Psoas muscle (tissue), 8 donors: ENCODE measurements at regions of chr14 and their contacts with region 1.

Region 1: DNA sequence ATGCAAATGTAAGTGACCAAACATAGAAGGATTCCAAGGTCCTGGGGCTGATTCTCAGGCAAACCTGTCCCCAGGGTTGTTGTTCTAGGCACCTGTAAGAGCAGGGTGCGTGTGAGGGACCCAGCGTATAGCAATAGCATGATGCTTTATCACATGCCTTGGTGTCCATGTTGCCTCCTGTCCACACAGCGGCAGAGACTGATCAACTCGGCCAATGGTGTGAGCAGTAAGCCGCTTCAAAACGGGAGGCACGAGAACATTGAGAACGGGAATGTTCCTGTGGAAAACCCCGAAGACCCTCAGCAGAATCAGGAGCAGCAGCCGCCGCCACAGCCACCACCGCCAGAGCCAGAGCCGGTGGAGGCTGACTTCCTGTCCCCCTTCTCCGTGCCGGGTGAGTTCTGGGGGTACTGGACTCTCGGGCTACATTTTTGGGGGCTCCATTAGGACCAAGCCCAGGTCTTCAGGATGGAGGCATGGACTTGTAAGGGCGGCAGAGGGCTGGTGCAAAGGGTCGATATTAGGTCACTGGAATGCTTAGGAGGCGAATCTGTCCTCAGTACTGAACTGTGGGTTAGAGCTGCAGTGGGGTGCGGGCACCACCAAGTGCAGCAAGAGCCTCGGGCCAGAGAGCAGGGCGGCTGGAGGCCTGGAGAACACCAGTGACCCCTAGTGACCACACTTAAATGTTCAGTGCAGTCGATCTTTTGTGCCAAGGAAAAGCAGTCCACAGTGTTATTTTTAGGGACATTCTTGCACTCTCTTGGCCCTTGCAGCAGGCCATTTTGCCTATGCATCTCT is 57.2 kb upstream of the RIN3 start:
- DNase-seq: peak; percentile 53 to 70
- ATAC-seq: peak; percentile 54 to 78 (median 76)
- H3K4me3 ChIP-seq: no peak overlapping the region
- H3K27ac ChIP-seq: no peak overlapping the region
- H3K4me1 ChIP-seq: no peaks in the 10 kb centered on the region
- H3K27me3 ChIP-seq: no peaks in the 10 kb centered on the region
- CTCF ChIP-seq: peak; percentile 46

Region 2: DNA sequence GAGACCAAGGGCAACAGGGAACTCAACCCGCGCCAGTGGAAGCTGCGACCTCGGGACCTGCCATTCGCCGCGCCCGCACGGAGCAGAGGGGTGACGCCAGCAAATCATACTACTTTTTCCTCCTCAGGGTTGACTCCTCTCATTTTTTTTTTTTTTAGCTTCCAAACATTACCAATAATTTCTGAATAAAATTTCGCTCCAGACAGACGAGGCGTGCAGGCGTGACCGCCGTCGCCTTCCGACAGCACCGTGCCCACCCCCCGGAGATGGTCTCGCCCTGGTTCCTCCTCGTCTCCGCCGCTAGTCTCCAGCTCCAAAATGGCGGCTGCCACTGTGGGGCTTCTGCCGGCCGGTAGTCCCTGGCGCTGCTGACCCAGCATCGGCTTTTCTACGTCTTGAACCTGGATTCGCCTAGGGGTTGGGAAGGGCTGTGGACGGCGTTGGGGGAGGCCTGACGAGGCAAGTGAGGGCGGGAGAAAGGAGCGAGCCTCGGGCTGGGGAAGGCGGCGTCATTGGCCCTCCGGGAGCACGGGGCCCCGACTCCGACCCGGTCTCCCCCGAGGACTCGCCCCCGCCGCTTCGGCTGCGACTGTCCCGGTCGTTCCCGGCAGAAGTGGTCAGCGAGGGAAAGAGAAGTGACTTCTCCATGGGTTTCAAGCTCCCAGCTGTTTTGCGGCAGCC is 334.6 kb before region 1 on chr14 and contains the starts of genes CPSF2 and NDUFB1:
- intact Hi-C with region 1: loop called in 1 of 2 experiments (anchors 5 kb)
- DNase-seq: peak; percentile 87 to 93
- ATAC-seq: peak; percentile 90 to 93 (median 92)
- H3K4me3 ChIP-seq: peak within 1 kb of the TSS; percentile 88
- H3K27ac ChIP-seq: peak within 1 kb of the TSS; percentile 96
- H3K4me1 ChIP-seq: peaks cover 45% of the 10 kb centered on the region
- H3K27me3 ChIP-seq: no peaks in the 10 kb centered on the region
- CTCF ChIP-seq: no peak
- total RNA-seq, gene CPSF2: 53.4 to 69.0 (median 63.3) TPM
- total RNA-seq, gene NDUFB1: 201 to 306 (median 238) TPM

Region 3: GRCh38 chr14:92507174-92507768 is 50.9 kb after region 1 on chr14:
- intact Hi-C with region 1: no loop called
- DNase-seq: no peak
- ATAC-seq: no peak
- H3K4me3 ChIP-seq: no peak overlapping the region
- H3K27ac ChIP-seq: no peak overlapping the region
- H3K4me1 ChIP-seq: peaks cover 5% of the 10 kb centered on the region
- H3K27me3 ChIP-seq: no peaks in the 10 kb centered on the region
- CTCF ChIP-seq: no peak

Region 4: GRCh38 chr14:92540472-92541053 is 84.1 kb after region 1 on chr14:
- intact Hi-C with region 1: no loop called
- DNase-seq: peak; percentile 92 to 93
- ATAC-seq: peak; percentile 82 to 94 (median 90)
- H3K4me3 ChIP-seq: no peak overlapping the region
- H3K27ac ChIP-seq: peak overlapping the region; percentile 73
- H3K4me1 ChIP-seq: peaks cover 8% of the 10 kb centered on the region
- H3K27me3 ChIP-seq: no peaks in the 10 kb centered on the region
- CTCF ChIP-seq: no peak